MCF 10A (cell line): ENCODE measurements at regions of chr18 and their contacts with region 1.

Region 1: DNA sequence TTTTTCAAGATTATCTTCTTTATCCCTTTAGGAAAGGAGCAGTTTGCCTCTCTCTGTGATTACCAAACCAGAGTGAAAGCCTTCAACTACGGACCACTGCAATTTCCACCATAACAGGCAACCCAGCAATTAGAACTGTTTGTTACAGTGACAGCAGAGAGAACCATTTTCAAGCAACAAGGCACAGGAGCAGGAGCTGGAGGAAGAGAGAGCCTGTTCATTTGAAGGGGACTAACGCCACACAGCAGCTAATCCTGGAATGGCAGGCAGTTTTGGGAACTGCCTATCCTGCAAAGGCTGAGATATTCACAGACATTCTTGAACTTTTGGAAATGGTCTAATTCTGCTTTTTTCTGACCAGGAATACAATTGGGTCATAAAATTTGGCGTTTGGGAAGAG is 1541.9 kb upstream of the PIK3C3 start:
- DNase-seq: peak; percentile 52
- H3K4me3 Mint-ChIP-seq: no peak overlapping the region
- H3K27ac Mint-ChIP-seq: no peak overlapping the region
- H3K4me1 Mint-ChIP-seq: peaks cover 12% of the 10 kb centered on the region
- H3K27me3 Mint-ChIP-seq: no peaks in the 10 kb centered on the region
- CTCF ChIP-seq: peak; percentile 53

Region 2: DNA sequence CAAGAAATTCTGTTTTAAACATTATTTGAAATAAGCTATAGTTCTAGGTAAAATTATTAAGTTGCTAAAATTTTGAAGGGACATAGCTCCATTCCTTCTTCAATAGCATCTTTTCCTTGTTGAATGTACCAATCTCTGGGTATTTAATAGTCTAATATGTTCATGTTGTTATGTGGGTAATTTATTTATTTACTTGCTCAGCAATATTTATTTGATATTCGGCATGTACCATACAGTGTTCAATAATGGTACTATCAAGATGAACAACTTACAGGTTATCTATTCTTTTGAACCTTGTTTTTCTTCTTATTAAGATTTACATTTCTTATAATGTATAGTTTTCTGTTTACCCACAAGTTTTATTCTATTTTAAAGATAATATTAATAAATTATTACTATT is 74.9 kb before region 1 on chr18:
- CTCF ChIA-PET with region 1: no interaction called
- POLR2A ChIA-PET with region 1: no interaction called
- intact Hi-C with region 1: no loop called
- DNase-seq: no peak
- H3K4me3 Mint-ChIP-seq: no peak overlapping the region
- H3K27ac Mint-ChIP-seq: no peak overlapping the region
- H3K4me1 Mint-ChIP-seq: no peaks in the 10 kb centered on the region
- H3K27me3 Mint-ChIP-seq: no peaks in the 10 kb centered on the region
- CTCF ChIP-seq: no peak

Region 3: DNA sequence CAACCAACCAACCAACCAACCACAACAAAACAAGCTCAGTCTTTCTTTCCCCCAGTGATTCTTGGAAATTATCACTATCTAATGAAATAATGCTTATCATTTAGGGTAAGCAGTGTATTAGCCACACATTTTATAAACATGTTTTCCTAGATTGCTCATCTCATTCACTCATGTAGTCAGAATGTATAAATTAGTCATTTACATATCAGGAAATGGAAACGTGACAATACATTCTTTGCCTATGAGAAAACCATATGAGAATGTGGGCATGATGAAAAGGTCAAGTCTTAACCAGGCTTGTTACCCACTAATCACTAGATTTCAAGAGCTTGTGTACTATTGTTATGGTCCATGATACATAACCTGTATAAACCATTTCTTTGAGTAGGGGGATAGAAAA is 41.5 kb before region 1 on chr18:
- CTCF ChIA-PET with region 1: no interaction called
- POLR2A ChIA-PET with region 1: no interaction called
- intact Hi-C with region 1: no loop called
- DNase-seq: peak; percentile 38
- H3K4me3 Mint-ChIP-seq: no peak overlapping the region
- H3K27ac Mint-ChIP-seq: no peak overlapping the region
- H3K4me1 Mint-ChIP-seq: peaks cover 10% of the 10 kb centered on the region
- H3K27me3 Mint-ChIP-seq: no peaks in the 10 kb centered on the region
- CTCF ChIP-seq: no peak

Region 4: DNA sequence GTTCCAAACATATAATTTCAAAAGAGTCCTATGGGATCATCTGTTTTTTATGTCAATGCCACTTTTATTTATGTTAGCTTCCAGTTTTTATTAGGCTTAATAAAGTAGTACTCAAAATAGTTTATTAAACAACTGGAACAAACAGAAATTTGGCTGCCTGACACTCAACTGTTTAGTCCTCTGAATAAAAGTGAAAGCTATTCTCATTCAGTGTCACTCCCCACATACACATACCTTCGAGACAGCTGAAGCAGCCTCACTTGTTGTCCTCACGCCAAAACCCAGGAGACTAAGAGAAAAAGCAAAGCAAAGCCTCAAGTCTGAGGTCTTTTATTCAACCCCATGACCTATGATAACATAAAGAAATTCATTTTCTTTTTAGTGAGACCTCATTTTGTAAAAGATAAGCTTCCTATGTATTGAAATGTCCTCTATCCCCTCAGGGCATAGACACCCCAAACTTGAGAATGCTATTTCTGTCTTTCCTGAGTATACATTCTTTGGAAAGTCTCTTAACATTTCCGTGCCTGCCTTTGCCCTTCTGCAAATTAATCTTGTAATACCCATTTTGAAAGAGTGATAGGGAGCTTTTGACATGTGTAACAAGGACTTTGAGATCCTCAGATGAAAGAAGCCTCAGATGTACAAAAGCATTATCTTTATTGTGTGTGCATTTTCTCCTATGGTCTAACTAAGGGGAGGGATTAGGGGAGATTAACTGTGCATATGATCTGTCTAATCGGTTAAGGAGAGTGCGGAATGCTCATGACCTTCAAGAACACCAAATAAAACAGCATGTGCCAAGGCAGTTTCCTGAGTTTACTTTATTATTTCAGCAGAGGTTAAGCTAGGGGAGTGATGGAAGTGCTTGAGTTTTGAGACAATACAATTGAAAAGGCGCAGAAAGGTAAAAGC is 18.2 kb after region 1 on chr18:
- CTCF ChIA-PET with region 1: no interaction called
- POLR2A ChIA-PET with region 1: no interaction called
- intact Hi-C with region 1: no loop called
- DNase-seq: no peak
- H3K4me3 Mint-ChIP-seq: no peak overlapping the region
- H3K27ac Mint-ChIP-seq: no peak overlapping the region
- H3K4me1 Mint-ChIP-seq: peaks cover 6% of the 10 kb centered on the region
- H3K27me3 Mint-ChIP-seq: no peaks in the 10 kb centered on the region
- CTCF ChIP-seq: no peak

Region 5: DNA sequence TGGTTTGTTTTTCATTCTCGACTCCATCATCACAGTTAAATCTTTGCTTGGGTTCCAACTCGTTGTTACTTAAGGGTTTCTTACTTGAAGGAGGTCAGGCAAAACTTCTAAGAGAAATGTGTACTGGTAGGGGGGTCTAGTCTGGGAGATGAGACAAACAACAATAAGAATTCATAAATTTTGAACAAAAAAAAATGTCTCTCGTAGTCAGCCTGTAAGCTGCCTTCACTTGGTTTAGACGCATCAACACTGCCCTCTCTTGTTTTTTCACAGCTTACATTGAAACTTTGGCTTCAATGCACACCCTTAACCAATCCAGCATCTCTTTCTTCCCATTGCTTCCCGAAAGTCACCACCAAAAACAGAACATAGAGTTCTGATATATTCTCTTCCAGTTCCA is 965.4 kb after region 1 on chr18:
- CTCF ChIA-PET with region 1: interaction called, 4 read pairs
- POLR2A ChIA-PET with region 1: no interaction called
- intact Hi-C with region 1: loop called (anchors 10 kb)
- DNase-seq: peak; percentile 54
- H3K4me3 Mint-ChIP-seq: no peak overlapping the region
- H3K27ac Mint-ChIP-seq: no peak overlapping the region
- H3K4me1 Mint-ChIP-seq: no peaks in the 10 kb centered on the region
- H3K27me3 Mint-ChIP-seq: no peaks in the 10 kb centered on the region
- CTCF ChIP-seq: peak; percentile 55